Breast epithelium (tissue), 4 donors: ENCODE measurements at regions of chr17 and their contacts with region 1.

Region 1: GRCh38 chr17:11855306-11855705 is 142.0 kb downstream of the ZNF18 start:
- DNase-seq: no peak
- H3K4me3 ChIP-seq: no peak overlapping the region
- H3K27ac ChIP-seq: no peak overlapping the region
- H3K4me1 ChIP-seq: no peaks in the 10 kb centered on the region
- H3K27me3 ChIP-seq: no peaks in the 10 kb centered on the region
- CTCF ChIP-seq: no peak
- POLR2A ChIP-seq: no peak

Region 2: DNA sequence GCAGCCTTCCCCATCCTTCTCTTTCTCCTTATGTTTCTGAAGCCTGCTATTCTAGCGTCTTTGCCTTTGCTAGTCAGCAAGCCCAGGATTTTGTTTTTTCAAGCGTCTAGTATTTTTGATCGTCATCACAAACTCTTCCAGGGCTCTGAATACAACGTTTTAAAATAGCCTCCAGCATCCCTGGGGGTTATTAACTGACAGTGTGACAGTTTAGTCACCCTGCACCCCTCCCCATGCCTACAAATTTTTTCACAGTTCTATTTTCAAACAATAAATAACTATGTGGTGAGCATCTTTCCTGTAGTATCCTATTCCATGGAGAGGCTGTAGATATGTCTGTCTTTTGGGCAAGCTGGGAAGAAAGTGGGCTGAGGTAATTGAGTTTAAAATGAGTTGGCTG is 446.2 kb after region 1 on chr17:
- intact Hi-C with region 1: loop called (anchors 5 kb)
- DNase-seq: no peak
- H3K4me3 ChIP-seq: no peak overlapping the region
- H3K27ac ChIP-seq: no peak overlapping the region
- H3K4me1 ChIP-seq: no peaks in the 10 kb centered on the region
- H3K27me3 ChIP-seq: no peaks in the 10 kb centered on the region
- CTCF ChIP-seq: no peak
- POLR2A ChIP-seq: no peak

Region 3: DNA sequence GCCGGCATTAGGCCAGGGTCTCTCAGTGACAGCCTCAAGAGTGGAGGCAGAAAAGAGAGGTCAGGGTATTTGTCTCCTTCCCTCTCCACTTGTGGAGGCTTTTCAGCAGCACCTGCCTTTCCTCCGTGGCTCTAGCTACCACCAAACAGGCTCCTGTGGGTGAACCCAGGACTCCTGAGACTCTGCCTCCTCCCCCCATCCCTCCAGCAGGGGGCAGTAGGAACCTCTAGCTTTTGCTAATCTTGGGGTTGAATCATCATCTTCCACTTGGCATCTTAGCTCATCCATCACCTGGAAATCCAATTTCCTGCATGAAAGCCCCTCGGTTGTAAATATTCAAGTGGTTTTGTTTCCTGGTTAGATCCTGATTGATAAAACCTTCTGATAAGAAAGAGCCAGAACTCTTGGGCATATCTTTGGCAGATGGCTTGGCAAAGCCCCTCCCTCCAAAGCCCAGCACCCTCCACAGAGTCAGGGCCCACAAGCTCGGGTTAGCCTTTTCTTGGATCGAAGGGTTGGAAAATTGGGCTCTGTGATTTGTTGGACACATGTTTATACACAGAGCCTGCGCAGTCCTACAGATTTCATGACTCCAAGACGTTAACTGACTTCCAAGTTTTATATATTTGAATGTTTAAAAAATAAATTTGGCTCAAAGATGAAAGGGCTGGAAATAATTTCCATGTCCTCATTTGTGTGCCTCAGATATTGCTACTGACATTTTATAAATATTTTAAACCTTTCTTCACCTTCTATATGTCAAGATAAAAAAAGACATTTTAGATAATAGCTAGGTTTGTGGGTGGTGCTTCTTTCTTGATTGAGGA is 487.5 kb after region 1 on chr17:
- intact Hi-C with region 1: no loop called
- DNase-seq: no peak
- H3K4me3 ChIP-seq: no peak overlapping the region
- H3K27ac ChIP-seq: no peak overlapping the region
- H3K4me1 ChIP-seq: no peaks in the 10 kb centered on the region
- H3K27me3 ChIP-seq: no peaks in the 10 kb centered on the region
- CTCF ChIP-seq: no peak
- POLR2A ChIP-seq: no peak

Region 4: DNA sequence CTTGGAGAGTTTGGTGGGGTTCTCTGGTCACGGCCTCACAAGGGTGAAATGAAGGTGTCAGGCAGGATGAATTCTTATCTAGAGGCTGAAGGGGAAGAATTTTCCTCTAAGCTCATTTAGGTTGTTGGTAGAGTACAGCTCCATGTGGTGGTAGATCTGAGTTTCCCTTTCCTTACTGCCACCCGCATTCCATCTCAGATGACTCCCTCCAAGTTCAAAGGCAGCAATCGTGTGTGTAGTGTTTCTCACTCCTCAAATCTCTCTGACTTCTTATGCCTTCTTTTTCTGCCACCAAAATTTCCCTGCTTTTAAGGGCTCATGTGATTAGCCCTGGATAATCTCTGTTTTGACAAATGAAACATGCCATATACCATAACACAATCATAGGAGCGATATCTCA is 674.9 kb after region 1 on chr17:
- intact Hi-C with region 1: no loop called
- DNase-seq: no peak
- H3K4me3 ChIP-seq: no peak overlapping the region
- H3K27ac ChIP-seq: no peak overlapping the region
- H3K4me1 ChIP-seq: no peaks in the 10 kb centered on the region
- H3K27me3 ChIP-seq: no peaks in the 10 kb centered on the region
- CTCF ChIP-seq: no peak
- POLR2A ChIP-seq: no peak